Tibial artery (tissue), 4 donors: ENCODE measurements at regions of chrX and their contacts with region 1.

Region 1: DNA sequence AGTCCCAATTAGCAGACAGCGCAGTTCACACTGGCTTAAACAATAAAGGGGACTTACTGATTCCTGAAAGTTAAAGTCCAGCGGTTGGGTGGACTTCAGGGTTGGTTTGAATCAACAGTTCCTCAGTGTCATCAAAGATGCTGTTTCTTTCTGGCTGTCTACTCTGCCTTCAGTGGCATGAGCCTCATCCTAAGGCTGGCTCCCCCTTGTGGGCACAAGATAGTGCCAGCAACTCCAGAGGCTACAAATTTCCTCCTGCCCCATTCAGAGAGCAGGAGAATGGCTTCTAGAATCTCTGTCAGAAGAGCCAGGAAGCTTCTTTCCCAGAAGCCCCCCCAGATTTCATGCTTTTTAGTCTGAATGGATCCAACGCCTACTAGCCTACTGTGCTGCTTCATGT is 82.4 kb upstream of the MTM1 start:
- DNase-seq: peak; percentile 24 to 66
- H3K4me3 ChIP-seq: no peak overlapping the region
- H3K27ac ChIP-seq: no peak overlapping the region
- H3K4me1 ChIP-seq: no peaks in the 10 kb centered on the region
- H3K27me3 ChIP-seq: no peaks in the 10 kb centered on the region
- CTCF ChIP-seq: peak; percentile 40 to 53

Region 2: GRCh38 chrX:149715468-149715867 is 770.5 kb before region 1 on chrX:
- intact Hi-C with region 1: loop called (anchors 10 kb)
- DNase-seq: no peak
- H3K4me3 ChIP-seq: no peak overlapping the region
- H3K27ac ChIP-seq: no peak overlapping the region
- H3K4me1 ChIP-seq: no peaks in the 10 kb centered on the region
- H3K27me3 ChIP-seq: no peaks in the 10 kb centered on the region
- CTCF ChIP-seq: no peak

Region 3: DNA sequence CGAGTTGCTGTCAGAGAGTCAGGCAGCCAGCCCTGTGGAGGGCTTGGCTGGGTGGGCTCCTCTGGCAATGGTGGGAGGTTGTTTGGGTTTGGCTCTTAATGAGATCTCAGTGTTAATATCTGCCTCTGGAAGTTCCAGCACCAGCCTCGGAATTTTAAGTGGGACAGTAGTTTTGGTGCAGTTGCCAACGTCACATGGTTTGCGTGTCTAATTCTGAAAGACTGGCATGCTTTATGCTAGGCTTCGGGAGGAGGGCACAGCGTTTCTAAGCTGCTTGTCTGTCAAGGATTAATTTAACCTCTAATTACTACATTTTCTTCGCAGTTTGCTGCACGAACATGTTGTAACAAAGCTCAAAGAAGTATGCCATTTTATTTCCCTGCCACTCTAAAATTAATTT is 113.7 kb before region 1 on chrX:
- intact Hi-C with region 1: loop called (anchors 10 kb)
- DNase-seq: no peak
- H3K4me3 ChIP-seq: peak overlapping the region; percentile 23 to 25
- H3K27ac ChIP-seq: peak overlapping the region; percentile 57 to 67
- H3K4me1 ChIP-seq: peaks cover 0 to 25% (median 2%) of the 10 kb centered on the region in 4 donors
- H3K27me3 ChIP-seq: no peaks in the 10 kb centered on the region
- CTCF ChIP-seq: no peak

Region 4: DNA sequence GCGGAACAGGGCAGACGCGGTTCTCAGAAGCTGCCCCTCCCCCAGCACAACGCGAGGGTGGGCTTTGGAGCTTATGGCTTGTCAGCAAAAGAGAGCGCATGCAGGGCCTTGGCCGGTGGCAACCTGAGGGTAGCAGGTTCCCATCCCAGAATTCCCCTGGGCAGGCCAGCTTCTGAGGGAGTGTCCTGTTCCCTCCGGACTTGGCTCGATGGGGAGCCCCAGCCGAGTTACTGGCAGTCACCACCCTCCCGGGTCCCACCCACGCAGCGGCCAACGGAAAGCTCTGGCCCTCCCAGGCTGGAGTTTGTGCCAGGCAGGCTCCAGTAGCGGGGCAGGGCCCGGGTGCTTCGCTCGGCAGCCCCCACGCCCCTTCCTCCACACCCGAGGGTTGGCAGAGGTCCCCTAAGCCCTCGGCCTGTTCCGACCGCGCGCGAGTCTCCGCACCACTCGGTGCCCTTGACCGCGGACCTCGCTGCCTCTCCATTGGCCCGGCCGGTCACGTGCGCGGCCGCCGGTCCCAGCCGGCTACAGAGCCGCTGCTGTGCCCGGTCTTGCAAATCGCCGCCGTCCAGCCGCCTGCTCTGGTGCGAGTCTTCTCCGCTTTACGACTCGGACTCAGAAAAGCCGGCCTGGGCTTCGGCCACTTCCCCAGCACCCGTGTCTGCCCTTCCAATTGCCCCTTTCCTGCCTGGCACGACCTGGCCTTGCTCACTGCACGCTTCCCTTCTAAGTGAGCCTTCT is 61.5 kb after region 1 on chrX:
- intact Hi-C with region 1: no loop called
- DNase-seq: peak; percentile 58 to 89
- H3K4me3 ChIP-seq: peak overlapping the region; percentile 43 to 56
- H3K27ac ChIP-seq: peak overlapping the region; percentile 91 to 92
- H3K4me1 ChIP-seq: peaks cover 0 to 30% (median 8%) of the 10 kb centered on the region in 4 donors
- H3K27me3 ChIP-seq: no peaks in the 10 kb centered on the region
- CTCF ChIP-seq: no peak

Region 5: GRCh38 chrX:150587585-150588503 is 101.8 kb after region 1 on chrX:
- intact Hi-C with region 1: no loop called
- DNase-seq: peak in 1 of 2 donors; percentile 22
- H3K4me3 ChIP-seq: no peak overlapping the region
- H3K27ac ChIP-seq: no peak overlapping the region
- H3K4me1 ChIP-seq: no peaks in the 10 kb centered on the region
- H3K27me3 ChIP-seq: no peaks in the 10 kb centered on the region
- CTCF ChIP-seq: peak; percentile 33 to 54

Region 6: GRCh38 chrX:150826981-150827380 is 341.0 kb after region 1 on chrX:
- intact Hi-C with region 1: no loop called
- DNase-seq: no peak
- H3K4me3 ChIP-seq: no peak overlapping the region
- H3K27ac ChIP-seq: no peak overlapping the region
- H3K4me1 ChIP-seq: no peaks in the 10 kb centered on the region
- H3K27me3 ChIP-seq: no peaks in the 10 kb centered on the region
- CTCF ChIP-seq: no peak